Activated CD4-positive, alpha-beta memory T cell treated with anti-CD3 and anti-CD28 coated beads for 36 hours (primary cell): ENCODE measurements at regions of chr17 and their contacts with region 1.

Region 1: GRCh38 chr17:76271669-76272540 is 6.8 kb downstream of the UBALD2 start:
- DNase-seq: peak; percentile 94
- H3K4me3 Mint-ChIP-seq: peak overlapping the region; percentile 85
- H3K27ac Mint-ChIP-seq: peak overlapping the region; percentile 98
- H3K4me1 Mint-ChIP-seq: peaks cover 51% of the 10 kb centered on the region
- H3K27me3 Mint-ChIP-seq: no peaks in the 10 kb centered on the region

Region 2: DNA sequence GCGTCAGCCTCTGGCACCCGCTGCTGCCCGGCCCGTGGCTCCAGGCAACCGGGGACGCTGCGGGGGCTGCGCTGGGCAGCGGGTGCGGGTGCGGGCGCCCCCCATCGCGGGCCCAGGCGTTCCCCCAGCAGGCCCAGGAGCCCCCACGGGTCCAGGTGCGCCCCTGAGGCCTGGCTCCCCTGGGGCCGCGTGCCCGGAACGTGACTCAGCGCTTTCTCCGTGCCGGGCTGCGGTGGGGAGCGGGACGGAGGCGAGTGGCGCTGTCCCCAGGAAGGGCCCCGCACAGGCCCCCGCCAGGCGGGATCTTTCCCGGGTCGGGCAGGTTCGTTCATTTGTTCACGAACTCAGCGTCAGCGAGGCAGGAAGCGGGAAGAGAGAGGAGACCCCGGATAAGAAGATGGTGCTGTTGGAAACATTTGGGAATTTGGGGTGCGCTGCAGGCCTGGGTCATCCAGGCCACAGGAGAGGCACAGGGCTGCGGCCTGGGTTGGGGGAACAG is 149.9 kb before region 1 on chr17:
- CTCF ChIA-PET with region 1: interaction called, 38 read pairs
- POLR2A ChIA-PET with region 1: interaction called, 9 read pairs
- intact Hi-C with region 1: no loop called
- DNase-seq: peak; percentile 35
- H3K4me3 Mint-ChIP-seq: no peak overlapping the region
- H3K27ac Mint-ChIP-seq: no peak overlapping the region
- H3K4me1 Mint-ChIP-seq: peaks cover 9% of the 10 kb centered on the region
- H3K27me3 Mint-ChIP-seq: no peaks in the 10 kb centered on the region

Region 3: GRCh38 chr17:76182016-76182764 is 89.7 kb before region 1 on chr17:
- CTCF ChIA-PET with region 1: interaction called, 26 read pairs
- POLR2A ChIA-PET with region 1: interaction called, 298 read pairs
- intact Hi-C with region 1: no loop called
- DNase-seq: peak; percentile 98
- H3K4me3 Mint-ChIP-seq: peak overlapping the region; percentile 62
- H3K27ac Mint-ChIP-seq: peak overlapping the region; percentile 87
- H3K4me1 Mint-ChIP-seq: peaks cover 56% of the 10 kb centered on the region
- H3K27me3 Mint-ChIP-seq: no peaks in the 10 kb centered on the region

Region 4: GRCh38 chr17:76240461-76241203 is 31.3 kb before region 1 on chr17 and contains the start of gene RNF157:
- CTCF ChIA-PET with region 1: no interaction called
- POLR2A ChIA-PET with region 1: interaction called, 49 read pairs
- intact Hi-C with region 1: no loop called
- DNase-seq: peak; percentile 69
- H3K4me3 Mint-ChIP-seq: peak within 1 kb of the TSS; percentile 77
- H3K27ac Mint-ChIP-seq: peak within 1 kb of the TSS; percentile 67
- H3K4me1 Mint-ChIP-seq: peaks cover 41% of the 10 kb centered on the region
- H3K27me3 Mint-ChIP-seq: no peaks in the 10 kb centered on the region
- total RNA-seq, gene RNF157: 25.4 to 28.0 TPM

Region 5: GRCh38 chr17:76353599-76354316 is 81.9 kb after region 1 on chr17 and contains the start of gene PRPSAP1:
- CTCF ChIA-PET with region 1: no interaction called
- POLR2A ChIA-PET with region 1: no interaction called
- intact Hi-C with region 1: no loop called
- DNase-seq: peak; percentile 88
- H3K4me3 Mint-ChIP-seq: peak within 1 kb of the TSS; percentile 96
- H3K27ac Mint-ChIP-seq: peak within 1 kb of the TSS; percentile 99
- H3K4me1 Mint-ChIP-seq: peaks cover 18% of the 10 kb centered on the region
- H3K27me3 Mint-ChIP-seq: no peaks in the 10 kb centered on the region
- total RNA-seq, gene PRPSAP1: 40.1 to 42.1 TPM

Region 6: DNA sequence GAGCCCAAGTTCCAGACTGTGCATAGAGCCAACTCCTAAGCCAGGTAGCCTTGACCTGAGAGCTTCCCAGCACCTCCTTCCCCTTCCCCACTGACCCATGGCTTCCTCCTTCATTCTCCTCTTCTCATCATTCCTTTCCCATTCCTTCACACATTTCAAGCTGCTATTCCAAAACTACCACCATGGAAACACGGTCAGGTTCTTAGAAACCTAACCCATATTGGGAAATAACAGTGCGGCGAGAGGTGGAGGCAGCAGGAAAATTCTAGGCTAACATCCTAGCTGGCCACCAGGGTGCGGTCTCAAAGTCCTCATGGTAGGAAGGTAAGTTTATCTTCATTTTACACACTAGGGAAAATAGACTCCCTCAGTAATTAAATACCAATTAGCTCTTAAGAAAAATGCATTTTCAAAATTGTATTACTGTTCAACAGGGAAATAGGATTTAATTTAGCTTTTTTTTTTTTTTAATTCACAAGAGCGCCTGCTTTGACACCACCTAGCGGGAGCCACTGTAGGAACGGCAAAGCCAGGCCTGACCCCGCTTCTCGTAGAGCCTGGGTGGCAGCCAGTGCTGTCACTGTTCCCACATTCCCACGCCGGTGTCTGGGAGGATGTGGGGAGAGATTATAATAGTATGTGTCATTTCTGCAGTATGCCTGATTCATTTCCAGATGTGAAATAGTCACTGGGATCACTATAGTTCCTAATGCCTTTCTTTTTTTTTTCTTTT is 98.5 kb after region 1 on chr17:
- CTCF ChIA-PET with region 1: no interaction called
- POLR2A ChIA-PET with region 1: no interaction called
- intact Hi-C with region 1: no loop called
- DNase-seq: peak; percentile 27
- H3K4me3 Mint-ChIP-seq: no peak overlapping the region
- H3K27ac Mint-ChIP-seq: no peak overlapping the region
- H3K4me1 Mint-ChIP-seq: peaks cover 5% of the 10 kb centered on the region
- H3K27me3 Mint-ChIP-seq: no peaks in the 10 kb centered on the region